ENCODE measurements at regions of chr1 and their contacts with region 1.

Region 1: GRCh38 chr1:246689409-246690008 is 34.7 kb upstream of the SCCPDH start:
- DNase-seq: peak; percentile 78 to 85 (median 84)
- H3K4me3 ChIP-seq: peak overlapping the region in 4 of 7 experiments; percentile 19 to 71 (median 50)
- H3K27ac ChIP-seq: no peak overlapping the region
- H3K4me1 ChIP-seq: peaks cover 0 to 5% (median 3%) of the 10 kb centered on the region in 4 experiments
- H3K27me3 ChIP-seq: no peaks in the 10 kb centered on the region

Region 2: DNA sequence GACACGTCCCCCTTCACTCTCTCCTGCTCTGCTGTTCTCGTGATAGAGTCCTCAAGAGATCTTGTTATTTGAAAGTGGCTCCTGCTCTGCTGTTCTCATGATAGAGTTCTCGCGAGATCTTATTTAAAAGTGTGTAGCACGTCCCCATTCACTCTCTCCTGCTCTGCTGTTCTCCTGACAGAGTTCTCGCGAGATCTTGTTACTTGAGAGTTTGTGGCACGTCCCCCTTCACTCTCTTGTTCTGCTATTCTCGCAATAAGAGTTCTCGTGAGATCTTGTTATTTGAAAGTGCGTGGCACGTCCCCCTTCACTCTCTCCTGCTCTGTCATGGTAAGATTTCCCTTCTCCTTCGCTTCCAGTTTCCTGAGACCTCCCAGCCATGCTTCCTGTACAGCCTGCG is 230.3 kb before region 1 on chr1:
- CTCF ChIA-PET with region 1: no interaction called
- POLR2A ChIA-PET with region 1: no interaction called
- DNase-seq: peak in 2 of 3 donors; percentile 55 to 61
- H3K4me3 ChIP-seq: peak overlapping the region in 2 of 7 experiments; percentile 7 to 57
- H3K27ac ChIP-seq: no peak overlapping the region
- H3K4me1 ChIP-seq: peaks cover 0 to 21% (median 9%) of the 10 kb centered on the region in 4 experiments
- H3K27me3 ChIP-seq: no peaks in the 10 kb centered on the region

Region 3: GRCh38 chr1:246597340-246597739 is 92.2 kb before region 1 on chr1:
- CTCF ChIA-PET with region 1: no interaction called
- POLR2A ChIA-PET with region 1: no interaction called
- DNase-seq: peak; percentile 66 to 89 (median 87)
- H3K4me3 ChIP-seq: no peak overlapping the region
- H3K27ac ChIP-seq: peak overlapping the region; percentile 72 to 79
- H3K4me1 ChIP-seq: peaks cover 0 to 14% (median 1%) of the 10 kb centered on the region in 4 experiments
- H3K27me3 ChIP-seq: no peaks in the 10 kb centered on the region

Region 4: GRCh38 chr1:246753670-246754535 is 64.4 kb after region 1 on chr1:
- CTCF ChIA-PET with region 1: interaction called, 14 read pairs
- POLR2A ChIA-PET with region 1: no interaction called
- DNase-seq: peak; percentile 79 to 89 (median 82)
- H3K4me3 ChIP-seq: no peak overlapping the region
- H3K27ac ChIP-seq: no peak overlapping the region
- H3K4me1 ChIP-seq: no peaks in the 10 kb centered on the region
- H3K27me3 ChIP-seq: no peaks in the 10 kb centered on the region